ENCODE measurements at regions of chr5 and their contacts with region 1.

Region 1: DNA sequence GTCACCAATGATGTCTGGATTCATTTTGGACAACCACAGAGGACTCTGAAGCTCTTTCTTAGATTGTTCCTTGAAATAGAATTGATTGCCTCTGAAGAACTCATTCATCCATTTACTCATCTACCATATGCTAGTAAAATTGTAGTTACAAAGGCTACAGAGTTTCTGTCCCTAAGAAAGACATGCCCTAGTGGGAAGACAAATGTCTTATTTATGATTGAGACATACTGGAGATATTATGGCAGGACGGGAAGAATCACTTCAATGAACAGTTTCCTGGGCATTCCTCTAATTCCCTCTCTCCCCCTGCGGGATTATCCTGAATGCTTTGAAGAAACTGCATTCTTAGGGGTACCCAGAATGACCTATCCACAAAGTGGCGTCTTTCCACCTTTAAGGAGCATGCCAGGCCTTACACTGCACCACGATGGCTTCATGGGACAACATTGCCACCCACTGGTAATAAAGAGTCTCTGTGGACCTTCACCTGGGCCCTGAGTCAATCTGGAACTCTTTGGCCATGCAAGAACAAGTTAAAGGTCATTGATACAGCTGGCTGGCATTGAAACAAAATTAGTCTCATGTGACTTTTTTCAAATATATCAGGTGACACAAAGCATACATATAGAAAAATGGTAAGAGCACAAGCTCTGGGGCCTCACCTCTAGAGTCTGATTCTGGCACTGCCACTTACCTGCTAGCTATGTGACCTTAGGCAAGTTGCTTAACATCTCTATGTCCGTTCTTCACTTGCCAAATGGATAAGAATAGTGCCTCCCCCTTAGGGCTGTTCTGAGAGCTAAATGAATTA is 32.1 kb downstream of the ANKRD55 start:
- DNase-seq: peak; percentile 41 to 66 (median 46)
- H3K4me3 ChIP-seq: no peak overlapping the region
- H3K27ac ChIP-seq: no peak overlapping the region
- H3K4me1 ChIP-seq: no peaks in the 10 kb centered on the region
- H3K27me3 ChIP-seq: no peaks in the 10 kb centered on the region
- CTCF ChIP-seq: peak; percentile 26 to 73 (median 62)
- EP300 ChIP-seq: no peak
- POLR2A ChIP-seq: no peak

Region 2: DNA sequence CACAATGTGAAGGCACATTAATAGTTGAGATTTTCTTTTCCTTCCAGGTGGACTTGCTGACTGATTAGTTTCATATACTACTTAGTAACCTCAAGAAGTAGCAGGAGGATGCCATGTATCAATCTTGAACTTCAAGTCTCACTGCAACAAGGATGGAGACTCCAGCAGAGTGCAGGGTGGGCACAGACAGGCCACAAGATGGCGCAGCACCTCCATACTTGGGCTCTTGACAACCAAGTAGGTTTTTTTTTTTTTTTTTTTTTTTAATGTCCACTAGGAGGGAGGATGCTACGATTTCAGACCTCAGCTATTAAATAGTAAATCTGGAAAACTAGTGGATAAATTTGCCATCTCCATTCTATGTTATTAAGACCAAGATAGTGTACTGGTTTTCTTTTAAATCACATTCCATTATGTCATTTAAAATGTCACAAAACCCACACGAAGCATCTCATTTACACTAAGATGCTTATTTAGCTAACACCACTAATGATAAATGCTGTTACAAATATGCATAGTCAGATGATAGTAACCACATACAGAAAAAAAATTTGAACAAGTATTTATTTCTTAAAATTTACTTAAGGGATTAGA is 264.9 kb before region 1 on chr5:
- intact Hi-C with region 1: loop called (anchors 5 to 10 kb)
- DNase-seq: peak; percentile 78 to 89 (median 86)
- H3K4me3 ChIP-seq: no peak overlapping the region
- H3K27ac ChIP-seq: no peak overlapping the region
- H3K4me1 ChIP-seq: no peaks in the 10 kb centered on the region
- H3K27me3 ChIP-seq: no peaks in the 10 kb centered on the region
- CTCF ChIP-seq: peak; percentile 54 to 80 (median 69)
- EP300 ChIP-seq: no peak
- POLR2A ChIP-seq: no peak

Region 3: GRCh38 chr5:55982957-55983381 is 218.1 kb before region 1 on chr5:
- intact Hi-C with region 1: loop called in 1 of 4 experiments (anchors 10 kb)
- DNase-seq: no peak
- H3K4me3 ChIP-seq: no peak overlapping the region
- H3K27ac ChIP-seq: no peak overlapping the region
- H3K4me1 ChIP-seq: peaks cover 3% of the 10 kb centered on the region
- H3K27me3 ChIP-seq: no peaks in the 10 kb centered on the region
- CTCF ChIP-seq: no peak
- EP300 ChIP-seq: no peak
- POLR2A ChIP-seq: no peak

Region 4: DNA sequence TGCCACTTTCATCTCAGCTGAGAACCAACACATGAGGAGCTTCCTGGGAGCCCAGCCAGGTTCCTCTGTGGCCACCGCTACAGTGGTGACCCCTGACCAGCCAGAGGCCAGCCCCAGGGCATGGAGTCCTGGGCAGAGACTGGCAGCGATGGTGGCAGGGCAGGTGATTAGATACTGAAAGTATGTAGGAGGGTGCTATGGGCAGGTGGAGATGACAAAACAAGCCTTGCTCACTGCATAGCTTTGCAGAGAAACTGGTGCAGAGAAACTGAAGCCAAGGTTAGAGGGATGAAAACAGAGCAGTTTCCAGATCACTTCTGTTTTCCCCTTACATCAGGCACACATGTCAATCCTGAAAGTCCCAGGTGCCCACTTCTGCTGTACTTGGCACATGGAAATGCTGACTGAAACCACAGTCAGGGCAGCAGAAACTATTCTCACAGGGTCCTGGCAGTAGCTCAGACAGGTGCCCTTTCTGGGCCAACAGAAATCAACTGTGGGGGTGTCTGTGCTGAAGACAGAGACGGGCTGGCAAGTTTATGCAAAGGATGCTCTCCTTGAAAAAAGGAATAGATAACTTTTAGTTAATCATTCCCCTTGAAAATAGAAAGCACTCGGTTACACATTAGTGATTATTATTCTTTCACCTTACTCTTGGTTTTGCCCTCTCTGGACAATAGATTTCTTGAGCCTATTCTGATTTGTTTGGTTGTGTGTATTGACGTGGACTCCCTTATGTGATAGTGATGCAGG is 58.3 kb before region 1 on chr5:
- intact Hi-C with region 1: no loop called
- DNase-seq: no peak
- H3K4me3 ChIP-seq: no peak overlapping the region
- H3K27ac ChIP-seq: no peak overlapping the region
- H3K4me1 ChIP-seq: no peaks in the 10 kb centered on the region
- H3K27me3 ChIP-seq: no peaks in the 10 kb centered on the region
- CTCF ChIP-seq: no peak
- EP300 ChIP-seq: no peak
- POLR2A ChIP-seq: no peak

Measured in ovary (tissue), 10 donors.